ENCODE measurements at regions of chr4 and their contacts with region 1.

Region 1: DNA sequence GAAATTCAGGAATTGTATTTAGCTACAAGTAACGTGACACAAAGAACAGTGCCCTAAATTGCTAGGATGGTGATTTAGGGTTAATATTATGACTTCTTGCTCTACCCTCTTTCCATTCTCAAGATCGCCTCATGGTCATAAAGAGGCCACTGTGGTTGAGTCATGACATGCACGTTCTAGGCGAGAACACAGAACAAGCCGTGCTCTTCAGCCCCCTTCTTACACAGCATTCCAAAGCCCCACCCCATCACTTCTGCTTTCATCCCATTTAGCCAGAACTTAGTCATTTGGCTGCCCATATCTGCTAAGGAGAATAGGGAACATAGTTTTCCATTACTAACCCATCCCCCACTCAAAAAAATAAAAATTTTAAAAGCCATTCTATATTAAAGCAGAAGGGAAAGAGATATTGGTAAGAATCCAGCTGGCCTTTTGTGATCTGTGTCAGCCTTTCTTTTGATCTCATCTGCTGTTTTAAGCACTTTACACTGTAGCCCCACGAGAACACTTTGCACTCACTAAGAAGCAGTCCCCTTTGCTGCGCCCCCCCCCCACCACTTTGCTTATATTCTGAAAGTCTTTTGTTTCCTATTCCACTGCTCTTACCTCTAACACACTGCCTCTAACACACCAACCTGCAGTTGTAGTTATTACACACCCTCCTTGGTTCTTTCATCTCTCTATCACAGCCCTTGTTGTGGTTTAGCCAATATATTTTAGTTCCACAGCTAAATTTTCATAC is 28.4 kb downstream of the NPNT start:
- DNase-seq: peak in 1 of 2 donors; percentile 86
- H3K4me3 ChIP-seq: peak overlapping the region in 1 of 2 donors; percentile 8
- H3K27ac ChIP-seq: peak overlapping the region; percentile 52 to 65
- H3K4me1 ChIP-seq: peaks cover 0 to 39% of the 10 kb centered on the region in 2 donors
- H3K27me3 ChIP-seq: no peaks in the 10 kb centered on the region
- CTCF ChIP-seq: no peak

Region 2: GRCh38 chr4:105978684-105979296 is 55.1 kb after region 1 on chr4:
- intact Hi-C with region 1: loop called (anchors 5 kb)
- DNase-seq: peak; percentile 25 to 88
- H3K4me3 ChIP-seq: no peak overlapping the region
- H3K27ac ChIP-seq: peak overlapping the region; percentile 84 to 89
- H3K4me1 ChIP-seq: peaks cover 3 to 7% of the 10 kb centered on the region in 2 donors
- H3K27me3 ChIP-seq: no peaks in the 10 kb centered on the region
- CTCF ChIP-seq: no peak

Measured in ascending aorta (tissue), 2 donors.